IMR-90 (cell line): ENCODE measurements at regions of chr1 and their contacts with region 1.

Region 1: DNA sequence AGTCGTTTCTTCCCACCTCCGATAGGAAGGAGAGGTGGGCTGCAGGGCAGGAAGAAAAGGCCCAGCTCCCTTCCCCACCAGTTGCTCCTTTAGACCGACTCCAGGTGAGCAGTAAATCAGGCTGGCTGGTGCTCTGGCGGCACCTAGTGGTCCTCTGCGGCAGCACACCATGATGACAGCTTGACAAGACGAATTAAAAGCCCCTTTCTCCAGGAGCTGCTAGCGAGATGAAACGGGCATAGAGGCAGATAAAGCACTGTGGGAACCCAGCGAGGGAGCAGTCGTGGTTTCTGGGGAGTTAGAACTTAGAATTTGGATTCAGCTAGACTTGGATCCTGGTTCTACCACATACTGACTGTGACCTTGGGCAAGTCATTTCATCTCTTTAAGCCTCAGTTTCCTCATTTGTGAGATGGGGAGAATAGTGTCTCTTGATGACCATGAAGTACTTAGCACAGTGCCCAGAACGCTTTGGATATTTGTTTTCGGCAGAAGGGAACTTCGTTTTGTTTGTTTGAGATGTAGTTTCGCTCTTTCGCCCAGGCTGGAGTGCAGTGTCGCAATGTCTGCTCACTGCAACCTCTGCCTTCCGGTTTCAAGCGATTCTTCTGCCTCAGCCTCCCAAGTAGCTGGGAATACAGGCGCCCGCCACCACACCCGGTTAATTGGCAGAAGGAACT is 21.8 kb upstream of the COL9A2 start:
- DNase-seq: peak; percentile 77
- ATAC-seq: peak; percentile 97
- H3K4me3 ChIP-seq: no peak overlapping the region
- H3K27ac ChIP-seq: no peak overlapping the region
- H3K4me1 ChIP-seq: no peaks in the 10 kb centered on the region
- H3K27me3 ChIP-seq: peaks cover 5% of the 10 kb centered on the region
- CTCF ChIP-seq: peak; percentile 97
- POLR2A ChIP-seq: peak; percentile 52; the same call in 1 of the 2 replicates
- RAD21 ChIP-seq: peak; percentile 99

Region 2: DNA sequence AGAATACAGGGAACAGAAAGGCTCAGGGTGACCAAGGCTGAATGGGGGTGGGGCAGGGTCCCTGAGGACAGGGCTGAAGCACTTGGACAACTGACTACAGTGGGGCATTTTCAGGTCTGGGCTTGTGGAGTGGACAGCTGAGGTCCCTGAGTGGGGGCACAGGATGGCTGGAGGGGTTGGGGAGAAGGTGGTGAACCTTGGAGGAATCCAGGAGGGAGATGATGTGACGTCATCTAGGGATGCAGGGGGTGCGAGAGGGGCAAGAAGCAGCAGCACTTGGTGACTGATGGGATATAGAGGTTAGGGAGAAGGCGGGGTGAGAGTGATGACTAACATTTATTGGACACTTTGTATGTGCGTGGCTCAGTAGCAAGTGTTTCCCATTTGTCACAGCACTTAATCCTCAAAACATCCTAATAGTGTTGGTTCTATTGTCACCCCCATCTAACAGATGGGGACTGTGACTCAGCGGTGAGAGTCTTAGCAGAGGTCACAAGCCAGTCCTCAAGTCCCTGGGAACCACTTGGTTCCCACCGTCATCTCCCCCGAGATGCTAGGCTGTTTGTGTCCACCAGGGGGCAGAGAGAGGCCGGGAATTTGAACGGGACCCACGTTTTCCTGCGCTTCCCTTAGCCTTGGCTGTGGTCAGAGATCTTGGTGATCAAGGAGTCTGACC is 522.3 kb before region 1 on chr1:
- CTCF ChIA-PET with region 1: no interaction called
- POLR2A ChIA-PET with region 1: no interaction called
- dilution Hi-C with region 1: no loop called
- in situ Hi-C with region 1: no loop called
- intact Hi-C with region 1: loop called (anchors 5 kb)
- DNase-seq: peak; percentile 91
- ATAC-seq: peak; percentile 95
- H3K4me3 ChIP-seq: no peak overlapping the region
- H3K27ac ChIP-seq: no peak overlapping the region
- H3K4me1 ChIP-seq: no peaks in the 10 kb centered on the region
- H3K27me3 ChIP-seq: peaks cover 8% of the 10 kb centered on the region
- CTCF ChIP-seq: peak; percentile 84
- POLR2A ChIP-seq: 0 out of 2 replicates have a peak, but pooled peaks have one; percentile 25
- RAD21 ChIP-seq: peak; percentile 85

Region 3: GRCh38 chr1:40078512-40079333 is 260.2 kb before region 1 on chr1:
- CTCF ChIA-PET with region 1: interaction called, 9 read pairs
- POLR2A ChIA-PET with region 1: no interaction called
- dilution Hi-C with region 1: no loop called
- in situ Hi-C with region 1: loop called (anchors 5 kb)
- intact Hi-C with region 1: no loop called
- DNase-seq: peak; percentile 46
- ATAC-seq: peak; percentile 53; the same call in 1 of the 2 replicates
- H3K4me3 ChIP-seq: no peak overlapping the region
- H3K27ac ChIP-seq: no peak overlapping the region
- H3K4me1 ChIP-seq: peaks cover 5% of the 10 kb centered on the region
- H3K27me3 ChIP-seq: no peaks in the 10 kb centered on the region
- CTCF ChIP-seq: peak; percentile 59
- POLR2A ChIP-seq: no peak
- RAD21 ChIP-seq: peak; percentile 48

Region 4: GRCh38 chr1:40153073-40153770 is 185.7 kb before region 1 on chr1:
- CTCF ChIA-PET with region 1: interaction called, 47 read pairs
- POLR2A ChIA-PET with region 1: interaction called, 4 read pairs
- dilution Hi-C with region 1: no loop called
- in situ Hi-C with region 1: loop called (anchors 5 kb)
- intact Hi-C with region 1: loop called (anchors 1 kb)
- DNase-seq: peak; percentile 77
- ATAC-seq: peak; percentile 85
- H3K4me3 ChIP-seq: no peak overlapping the region
- H3K27ac ChIP-seq: no peak overlapping the region
- H3K4me1 ChIP-seq: no peaks in the 10 kb centered on the region
- H3K27me3 ChIP-seq: peaks cover 14% of the 10 kb centered on the region
- CTCF ChIP-seq: peak; percentile 81
- POLR2A ChIP-seq: no peak
- RAD21 ChIP-seq: peak; percentile 74

Region 5: DNA sequence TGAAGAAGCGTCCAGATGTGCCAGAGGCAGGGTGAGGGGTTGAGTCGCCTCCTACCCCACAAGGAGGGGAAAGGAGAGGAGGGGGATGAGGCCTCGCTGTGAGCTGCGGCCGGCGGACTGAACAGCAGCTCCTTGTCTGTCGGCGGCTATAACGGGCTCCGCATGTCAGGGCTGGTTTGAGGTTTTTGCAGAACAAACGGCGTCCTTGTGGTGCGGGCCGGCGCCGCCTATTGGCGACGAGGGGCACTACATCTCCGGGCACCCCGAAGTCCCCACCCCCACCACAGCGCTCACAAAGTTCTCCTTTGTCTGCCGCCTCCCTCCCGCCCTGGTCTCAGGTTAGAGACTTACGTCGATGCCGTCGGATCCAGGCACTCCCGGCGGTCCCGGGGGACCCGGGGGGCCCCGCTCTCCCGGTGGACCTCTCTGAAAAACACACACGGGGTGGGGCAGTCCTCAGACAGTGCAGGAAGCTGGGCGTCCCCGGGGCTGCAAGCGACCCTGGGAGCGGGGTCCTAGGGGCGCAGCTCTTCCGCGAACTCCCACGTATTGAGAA is 23.6 kb before region 1 on chr1:
- CTCF ChIA-PET with region 1: interaction called, 16 read pairs
- POLR2A ChIA-PET with region 1: no interaction called
- dilution Hi-C with region 1: no loop called
- in situ Hi-C with region 1: no loop called
- intact Hi-C with region 1: no loop called
- DNase-seq: peak; percentile 83
- ATAC-seq: peak; percentile 97
- H3K4me3 ChIP-seq: peak overlapping the region; percentile 28; the same call in 1 of the 2 replicates
- H3K27ac ChIP-seq: peak overlapping the region; percentile 79
- H3K4me1 ChIP-seq: peaks cover 13% of the 10 kb centered on the region; the same call in 1 of the 2 replicates
- H3K27me3 ChIP-seq: peaks cover 37% of the 10 kb centered on the region
- CTCF ChIP-seq: peak; percentile 88
- POLR2A ChIP-seq: no peak
- RAD21 ChIP-seq: peak; percentile 71